ENCODE measurements at regions of chr6 and their contacts with region 1.

Region 1: GRCh38 chr6:73580247-73581149 is 59.7 kb upstream of the EEF1A1 start:
- DNase-seq: peak; percentile 95
- ATAC-seq: peak; percentile 85
- H3K4me3 ChIP-seq: peak overlapping the region; percentile 65
- H3K27ac ChIP-seq: peak overlapping the region; percentile 99
- H3K4me1 ChIP-seq: peaks cover 35% of the 10 kb centered on the region
- H3K27me3 ChIP-seq: no peaks in the 10 kb centered on the region
- CTCF ChIP-seq: peak; percentile 52

Region 2: DNA sequence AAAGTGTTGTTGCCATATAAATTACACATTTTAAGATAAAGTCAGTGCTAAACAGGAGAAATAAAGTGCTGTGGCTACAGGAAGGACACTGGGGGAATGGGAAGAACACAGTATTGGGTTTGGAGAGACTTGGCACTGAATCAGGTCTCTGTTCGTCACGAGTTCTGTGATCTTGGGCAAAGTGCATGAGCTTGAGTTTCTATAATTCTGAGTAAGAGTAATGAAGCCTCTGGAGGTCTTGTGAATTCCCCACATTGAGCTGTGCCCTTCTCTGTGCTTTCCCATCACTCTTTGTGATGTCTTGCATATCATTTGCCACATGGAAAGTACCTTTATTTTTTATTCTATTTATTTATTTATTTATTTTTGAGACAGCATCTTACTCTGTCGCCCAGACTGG is 42.8 kb before region 1 on chr6:
- CTCF ChIA-PET with region 1: no interaction called
- POLR2A ChIA-PET with region 1: no interaction called
- intact Hi-C with region 1: no loop called
- DNase-seq: no peak
- ATAC-seq: no peak
- H3K4me3 ChIP-seq: no peak overlapping the region
- H3K27ac ChIP-seq: no peak overlapping the region
- H3K4me1 ChIP-seq: no peaks in the 10 kb centered on the region
- H3K27me3 ChIP-seq: no peaks in the 10 kb centered on the region
- CTCF ChIP-seq: no peak

Region 3: GRCh38 chr6:73610444-73611275 is 30.2 kb after region 1 on chr6:
- CTCF ChIA-PET with region 1: no interaction called
- POLR2A ChIA-PET with region 1: interaction called, 3 read pairs
- intact Hi-C with region 1: loop called (anchors 2 kb)
- DNase-seq: peak; percentile 76
- ATAC-seq: peak; percentile 64
- H3K4me3 ChIP-seq: no peak overlapping the region
- H3K27ac ChIP-seq: no peak overlapping the region
- H3K4me1 ChIP-seq: no peaks in the 10 kb centered on the region
- H3K27me3 ChIP-seq: no peaks in the 10 kb centered on the region
- CTCF ChIP-seq: peak; percentile 67

Region 4: GRCh38 chr6:73653571-73654424 is 73.3 kb after region 1 on chr6 and contains the start of gene SLC17A5:
- CTCF ChIA-PET with region 1: no interaction called
- POLR2A ChIA-PET with region 1: interaction called, 6 read pairs
- intact Hi-C with region 1: loop called (anchors 2 kb)
- DNase-seq: peak; percentile 91
- ATAC-seq: peak; percentile 89
- H3K4me3 ChIP-seq: peak within 1 kb of the TSS; percentile 92
- H3K27ac ChIP-seq: peak within 1 kb of the TSS; percentile 60
- H3K4me1 ChIP-seq: peaks cover 28% of the 10 kb centered on the region
- H3K27me3 ChIP-seq: no peaks in the 10 kb centered on the region
- CTCF ChIP-seq: no peak
- total RNA-seq, gene SLC17A5: 3.3 and 5.2 TPM in 2 replicates

Measured in PC-3 (cell line).